CD14-positive monocyte (primary cell): ENCODE measurements at regions of chr2 and their contacts with region 1.

Region 1: DNA sequence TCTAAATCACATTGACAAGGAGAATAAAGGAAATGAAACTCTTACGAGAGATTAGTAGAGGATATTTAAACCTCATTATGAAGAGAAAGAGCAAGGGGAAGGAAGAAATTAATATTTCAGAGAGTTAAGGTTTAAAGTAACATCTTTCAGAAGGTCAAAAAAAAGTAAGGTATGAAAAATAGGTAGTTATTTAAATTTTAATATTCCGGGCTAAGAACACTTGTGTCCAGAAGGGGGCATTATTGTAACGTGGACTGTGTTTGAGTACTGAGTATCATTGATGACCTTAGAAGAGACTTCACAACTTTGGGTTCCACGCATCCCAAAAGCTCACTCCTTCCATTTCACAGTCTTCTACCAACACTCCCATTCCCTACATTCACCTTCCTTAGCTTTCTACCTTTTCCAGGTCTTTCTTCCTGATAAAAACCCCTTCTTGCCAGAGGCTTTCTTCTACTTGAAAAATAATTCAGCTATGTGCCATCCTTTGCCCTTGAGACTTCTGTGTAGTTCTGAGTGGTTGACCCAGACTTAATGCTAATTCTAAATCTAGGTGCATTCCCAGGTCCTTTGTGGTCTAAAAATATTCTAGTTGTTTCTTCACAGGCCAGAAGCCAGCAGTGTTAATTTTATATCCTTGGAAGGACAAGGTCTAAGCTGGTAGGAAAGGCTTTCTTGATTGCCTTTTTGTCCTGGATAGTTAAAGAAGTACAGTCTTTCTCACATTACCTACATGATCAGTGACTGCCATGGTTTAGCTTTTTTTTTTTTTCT is 16.5 kb downstream of the DYNC1I2 start:
- DNase-seq: peak; percentile 1 to 21 (median 15)
- H3K4me3 ChIP-seq: no peak overlapping the region
- H3K4me3 Mint-ChIP-seq: no peak overlapping the region
- H3K27ac ChIP-seq: no peak overlapping the region
- H3K27ac Mint-ChIP-seq: peak overlapping the region in 1 of 7 donors; percentile 61
- H3K4me1 ChIP-seq: no peaks in the 10 kb centered on the region
- H3K4me1 Mint-ChIP-seq: peaks cover 11% of the 10 kb centered on the region
- H3K27me3 ChIP-seq: no peaks in the 10 kb centered on the region
- H3K27me3 Mint-ChIP-seq: no peaks in the 10 kb centered on the region
- CTCF ChIP-seq: no peak

Region 2: DNA sequence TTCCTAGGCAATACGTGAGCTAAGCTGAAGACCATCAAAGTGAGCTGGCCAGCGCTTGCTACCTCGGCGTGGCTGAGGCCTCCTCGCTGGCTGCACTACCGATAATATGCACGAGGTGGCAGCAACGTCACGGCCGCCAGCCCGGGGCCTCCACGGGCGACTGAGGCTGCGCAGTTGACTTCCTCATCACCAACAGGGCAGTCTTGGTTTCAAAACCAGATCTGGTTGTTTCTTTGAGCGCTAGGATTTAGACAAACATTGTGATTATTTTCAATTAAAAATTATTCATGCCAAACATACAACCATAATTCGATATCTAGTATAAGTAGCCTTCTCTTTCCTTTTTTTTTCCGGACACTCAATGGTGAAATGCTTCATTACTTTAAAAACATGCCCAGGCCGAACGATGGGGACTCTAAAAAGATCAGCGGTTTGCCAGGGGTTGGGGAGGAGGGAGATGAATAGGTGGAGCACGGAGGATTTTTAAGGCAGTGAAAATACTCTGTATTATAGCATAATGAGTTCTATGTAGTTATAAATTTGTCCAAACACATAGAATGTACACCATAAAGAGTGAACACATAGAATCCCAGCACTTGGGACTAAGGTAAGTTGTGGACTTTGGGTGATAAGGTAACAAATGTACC is 129.5 kb before region 1 on chr2:
- intact Hi-C with region 1: loop called in 1 of 2 experiments (anchors 10 kb)
- DNase-seq: peak; percentile 71 to 80 (median 79)
- H3K4me3 ChIP-seq: no peak overlapping the region
- H3K4me3 Mint-ChIP-seq: peak overlapping the region in 1 of 2 donors; percentile 63
- H3K27ac ChIP-seq: no peak overlapping the region
- H3K27ac Mint-ChIP-seq: no peak overlapping the region
- H3K4me1 ChIP-seq: no peaks in the 10 kb centered on the region
- H3K4me1 Mint-ChIP-seq: peaks cover 4% of the 10 kb centered on the region
- H3K27me3 ChIP-seq: no peaks in the 10 kb centered on the region
- H3K27me3 Mint-ChIP-seq: peaks cover 4 to 6% (median 4%) of the 10 kb centered on the region in 3 donors
- CTCF ChIP-seq: peak; percentile 96

Region 3: GRCh38 chr2:172128484-172128883 is 424.7 kb after region 1 on chr2:
- intact Hi-C with region 1: loop called in 1 of 2 experiments (anchors 5 kb)
- DNase-seq: no peak
- H3K4me3 ChIP-seq: no peak overlapping the region
- H3K4me3 Mint-ChIP-seq: no peak overlapping the region
- H3K27ac ChIP-seq: no peak overlapping the region
- H3K27ac Mint-ChIP-seq: no peak overlapping the region
- H3K4me1 ChIP-seq: no peaks in the 10 kb centered on the region
- H3K4me1 Mint-ChIP-seq: no peaks in the 10 kb centered on the region
- H3K27me3 ChIP-seq: no peaks in the 10 kb centered on the region
- H3K27me3 Mint-ChIP-seq: peaks cover 0 to 2% (median 2%) of the 10 kb centered on the region in 3 donors
- CTCF ChIP-seq: no peak